Aorta (tissue), 5 donors: ENCODE measurements at regions of chr12 and their contacts with region 1.

Region 1: DNA sequence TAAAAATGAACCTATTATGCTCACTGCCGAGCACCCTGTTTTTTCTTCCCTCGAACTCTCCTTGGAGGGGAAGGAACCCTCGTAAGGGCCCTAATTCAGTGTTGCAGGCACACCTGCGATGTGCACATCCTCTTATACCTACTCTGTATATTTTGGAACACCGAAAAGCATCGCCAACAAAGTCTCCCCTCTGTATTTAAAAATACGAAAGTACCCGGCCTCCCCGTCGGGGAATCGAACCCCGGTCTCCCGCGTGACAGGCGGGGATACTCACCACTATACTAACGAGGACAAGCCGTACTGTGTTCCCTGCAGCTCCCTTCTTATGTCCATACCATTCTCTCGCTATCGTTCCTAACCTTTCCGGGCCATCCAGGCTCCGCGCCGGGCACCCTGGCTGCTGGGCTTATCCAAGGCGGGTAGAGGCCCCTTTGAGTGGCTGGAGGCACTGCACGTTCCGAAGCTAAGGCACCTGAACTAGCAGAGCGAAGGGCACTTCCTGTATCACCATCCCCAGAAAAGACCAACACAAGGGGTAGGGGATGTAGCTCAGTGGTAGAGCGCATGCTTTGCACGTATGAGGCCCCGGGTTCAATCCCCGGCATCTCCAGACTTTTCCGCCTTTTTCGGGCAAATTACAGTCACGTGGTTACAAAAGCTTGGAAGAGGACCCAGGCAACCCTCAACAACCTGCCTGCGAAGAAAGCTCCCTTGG is 25.1 kb upstream of the UBC start:
- DNase-seq: peak; percentile 88 to 95
- ATAC-seq: peak; percentile 95
- H3K4me3 ChIP-seq: peak overlapping the region; percentile 48 to 53
- H3K27ac ChIP-seq: peak overlapping the region; percentile 47 to 95
- H3K4me1 ChIP-seq: no peaks in the 10 kb centered on the region
- H3K27me3 ChIP-seq: no peaks in the 10 kb centered on the region

Region 2: DNA sequence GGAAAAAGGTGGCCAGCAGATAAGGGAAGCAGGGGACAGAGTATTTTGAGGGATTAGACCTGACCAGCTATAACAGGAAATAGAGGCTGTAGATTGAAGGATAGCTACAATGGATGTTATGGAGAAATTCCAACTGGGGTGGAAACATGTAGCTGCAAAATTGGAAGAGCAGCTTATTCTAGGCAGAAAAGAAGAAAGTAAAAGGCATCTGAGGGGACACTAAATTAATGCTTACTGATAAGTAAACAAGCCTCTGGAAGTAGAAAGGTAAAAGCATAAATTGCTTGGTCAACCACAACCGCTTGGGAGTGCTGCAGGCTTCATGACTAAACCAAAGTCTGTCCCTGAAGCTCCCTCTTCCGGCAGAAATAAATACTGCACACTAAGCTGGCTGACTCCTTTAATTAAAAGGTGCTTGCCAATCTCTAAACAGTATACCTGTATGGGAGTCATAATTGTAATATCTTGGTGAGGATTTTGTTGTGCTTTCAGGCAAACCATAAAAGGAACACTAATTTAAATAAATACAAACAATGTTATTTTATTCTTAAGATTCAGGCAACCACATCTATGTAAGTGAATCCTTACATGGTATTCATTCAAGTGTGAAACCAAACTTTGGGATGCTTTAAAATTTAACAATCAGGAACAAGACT is 32.9 kb before region 1 on chr12:
- intact Hi-C with region 1: loop called in 1 of 2 experiments (anchors 2 kb)
- DNase-seq: peak; percentile 85 to 87
- ATAC-seq: peak; percentile 76
- H3K4me3 ChIP-seq: no peak overlapping the region
- H3K27ac ChIP-seq: no peak overlapping the region
- H3K4me1 ChIP-seq: peaks cover 0 to 3% of the 10 kb centered on the region in 2 donors
- H3K27me3 ChIP-seq: no peaks in the 10 kb centered on the region

Region 3: GRCh38 chr12:124917135-124917840 is 22.3 kb before region 1 on chr12:
- intact Hi-C with region 1: loop called in 1 of 2 experiments (anchors 2 kb)
- DNase-seq: peak; percentile 97 to 99
- ATAC-seq: peak; percentile 93
- H3K4me3 ChIP-seq: peak overlapping the region in 1 of 2 donors; percentile 58
- H3K27ac ChIP-seq: peak overlapping the region; percentile 100
- H3K4me1 ChIP-seq: peaks cover 0 to 2% of the 10 kb centered on the region in 2 donors
- H3K27me3 ChIP-seq: no peaks in the 10 kb centered on the region

Region 4: DNA sequence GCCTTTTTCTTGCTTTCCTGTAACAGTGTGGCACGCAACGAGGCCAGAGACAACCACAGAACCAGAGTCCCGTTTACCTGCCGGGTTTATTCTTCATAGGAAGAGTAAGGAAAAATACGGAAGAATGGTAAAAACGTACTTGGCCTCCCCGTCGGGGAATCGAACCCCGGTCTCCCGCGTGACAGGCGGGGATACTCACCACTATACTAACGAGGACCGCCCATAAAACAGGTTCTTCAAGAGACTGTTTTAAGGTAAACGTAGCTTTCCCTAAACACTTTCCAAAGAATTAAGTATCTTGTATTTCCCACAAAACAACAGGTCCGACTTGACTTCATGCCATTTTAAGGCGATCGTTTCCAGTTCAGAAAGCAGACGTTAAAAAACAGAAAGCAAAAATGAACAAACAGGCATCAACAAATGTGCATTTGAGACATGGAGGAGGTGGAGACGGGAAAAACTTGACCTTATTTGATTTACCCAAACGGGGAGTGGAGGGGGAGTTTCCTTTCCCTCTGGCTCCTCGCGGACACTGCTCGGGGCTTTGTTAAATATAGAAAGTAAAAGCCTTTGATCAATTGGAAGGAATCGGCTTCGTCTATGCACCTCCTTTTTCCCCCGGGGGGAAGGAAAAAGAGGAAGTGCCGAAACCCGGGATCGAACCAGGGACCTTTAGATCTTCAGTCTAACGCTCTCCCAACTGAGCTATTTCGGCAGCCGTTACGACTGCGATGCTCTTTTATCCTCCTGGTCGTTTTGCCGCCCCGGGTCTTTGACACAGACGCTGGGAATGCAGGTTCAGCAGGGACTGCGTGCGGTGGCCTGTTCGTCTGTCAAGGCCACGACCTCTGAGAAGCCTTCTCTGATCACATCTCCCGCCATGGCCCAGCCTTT is 12.1 kb before region 1 on chr12:
- intact Hi-C with region 1: loop called (anchors 1 kb)
- DNase-seq: peak; percentile 91 to 95
- ATAC-seq: peak; percentile 96
- H3K4me3 ChIP-seq: peak overlapping the region; percentile 56 to 94
- H3K27ac ChIP-seq: peak overlapping the region; percentile 5 to 87
- H3K4me1 ChIP-seq: no peaks in the 10 kb centered on the region
- H3K27me3 ChIP-seq: no peaks in the 10 kb centered on the region